Uterus (tissue), 4 donors: ENCODE measurements at regions of chr3 and their contacts with region 1.

Region 1: GRCh38 chr3:86316463-86316862 is 674.5 kb downstream of the VGLL3 start:
- DNase-seq: no peak
- H3K4me3 ChIP-seq: no peak overlapping the region
- H3K27ac ChIP-seq: no peak overlapping the region
- H3K4me1 ChIP-seq: no peaks in the 10 kb centered on the region
- H3K27me3 ChIP-seq: no peaks in the 10 kb centered on the region
- CTCF ChIP-seq: no peak
- POLR2A ChIP-seq: no peak

Region 2: DNA sequence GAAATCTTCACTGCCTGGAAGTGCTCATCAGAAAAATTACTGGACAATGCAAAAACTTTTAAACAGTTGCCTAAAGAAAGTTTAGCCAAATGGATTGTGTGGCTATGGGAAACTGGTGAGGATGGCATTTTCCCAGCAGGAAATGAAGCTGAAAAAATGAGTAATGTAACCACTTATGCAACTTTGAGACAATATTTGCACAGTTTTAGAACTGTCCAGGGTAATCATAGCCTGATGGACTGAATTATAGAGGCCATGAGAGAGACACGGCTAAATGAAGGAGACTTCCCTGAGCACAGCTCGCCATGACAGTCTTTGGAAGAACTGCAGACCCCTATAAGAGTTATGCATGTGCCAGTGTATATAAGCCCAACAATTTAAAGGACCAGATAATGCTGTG is 207.0 kb before region 1 on chr3:
- intact Hi-C with region 1: no loop called
- DNase-seq: no peak
- H3K4me3 ChIP-seq: no peak overlapping the region
- H3K27ac ChIP-seq: no peak overlapping the region
- H3K4me1 ChIP-seq: no peaks in the 10 kb centered on the region
- H3K27me3 ChIP-seq: no peaks in the 10 kb centered on the region
- CTCF ChIP-seq: no peak
- POLR2A ChIP-seq: no peak

Region 3: DNA sequence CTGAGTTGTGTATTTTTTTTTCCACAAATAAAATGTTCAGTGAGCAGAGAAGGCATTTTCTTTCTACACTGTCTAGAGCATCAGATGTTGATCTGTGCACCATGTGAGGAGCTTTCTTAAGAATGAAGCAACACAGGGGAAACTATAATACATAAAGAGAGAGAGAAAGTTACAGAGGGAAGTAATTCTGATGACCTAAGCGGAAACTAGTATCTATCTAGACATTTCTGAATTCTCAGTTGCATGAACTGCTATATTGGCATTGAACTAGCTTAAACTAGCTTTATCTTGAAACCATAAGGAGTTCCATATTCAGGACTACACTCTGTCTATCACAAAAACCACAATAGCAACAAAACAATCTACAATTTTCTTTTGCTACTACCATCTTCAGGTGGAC is 148.0 kb before region 1 on chr3:
- intact Hi-C with region 1: no loop called
- DNase-seq: no peak
- H3K4me3 ChIP-seq: no peak overlapping the region
- H3K27ac ChIP-seq: no peak overlapping the region
- H3K4me1 ChIP-seq: no peaks in the 10 kb centered on the region
- H3K27me3 ChIP-seq: no peaks in the 10 kb centered on the region
- CTCF ChIP-seq: no peak
- POLR2A ChIP-seq: no peak

Region 4: GRCh38 chr3:86257955-86258641 is 58.4 kb before region 1 on chr3:
- intact Hi-C with region 1: no loop called
- DNase-seq: no peak
- H3K4me3 ChIP-seq: no peak overlapping the region
- H3K27ac ChIP-seq: no peak overlapping the region
- H3K4me1 ChIP-seq: no peaks in the 10 kb centered on the region
- H3K27me3 ChIP-seq: no peaks in the 10 kb centered on the region
- CTCF ChIP-seq: no peak
- POLR2A ChIP-seq: no peak

Region 5: DNA sequence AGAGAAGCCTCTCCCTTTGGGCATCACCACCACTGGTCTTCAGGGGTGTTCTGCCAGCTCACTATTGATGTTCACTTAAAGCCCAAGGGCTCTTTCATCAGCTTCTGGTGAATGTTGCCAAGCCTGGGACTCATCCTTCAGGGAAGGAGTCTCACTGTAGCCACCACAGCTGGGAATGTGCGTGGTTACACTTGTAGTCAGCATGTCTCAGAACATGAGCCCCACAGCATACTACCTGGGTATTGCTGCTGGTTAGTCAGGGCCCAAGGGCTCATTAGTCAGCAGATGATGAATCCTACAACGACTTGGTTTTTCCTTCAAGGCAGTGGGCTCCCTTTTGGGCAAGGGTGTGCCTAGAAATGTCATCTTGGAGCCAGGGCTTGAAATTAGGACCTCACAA is 261.6 kb after region 1 on chr3:
- intact Hi-C with region 1: loop called (anchors 5 kb)
- DNase-seq: no peak
- H3K4me3 ChIP-seq: no peak overlapping the region
- H3K27ac ChIP-seq: no peak overlapping the region
- H3K4me1 ChIP-seq: no peaks in the 10 kb centered on the region
- H3K27me3 ChIP-seq: no peaks in the 10 kb centered on the region
- CTCF ChIP-seq: no peak
- POLR2A ChIP-seq: no peak